Endothelial cell of umbilical vein (primary cell): ENCODE measurements at regions of chr11 and their contacts with region 1.

Region 1: GRCh38 chr11:19311308-19312030 is 70.7 kb upstream of the E2F8 start:
- DNase-seq: peak; percentile 62
- H3K4me3 ChIP-seq: no peak overlapping the region
- H3K27ac ChIP-seq: no peak overlapping the region
- H3K4me1 ChIP-seq: no peaks in the 10 kb centered on the region
- H3K27me3 ChIP-seq: peaks cover 8 to 14% of the 10 kb centered on the region in 2 experiments
- CTCF ChIP-seq: peak; percentile 90 to 97
- POLR2A ChIP-seq: no peak

Region 2: GRCh38 chr11:19301361-19301760 is 10.1 kb before region 1 on chr11:
- CTCF ChIA-PET with region 1: interaction called, 6 read pairs
- POLR2A ChIA-PET with region 1: no interaction called
- dilution Hi-C with region 1: no loop called
- intact Hi-C with region 1: loop called (anchors 1 kb)
- DNase-seq: no peak
- H3K4me3 ChIP-seq: no peak overlapping the region
- H3K27ac ChIP-seq: no peak overlapping the region
- H3K4me1 ChIP-seq: no peaks in the 10 kb centered on the region
- H3K27me3 ChIP-seq: peaks cover 8 to 15% of the 10 kb centered on the region in 2 experiments
- CTCF ChIP-seq: no peak
- POLR2A ChIP-seq: no peak

Region 3: GRCh38 chr11:19359221-19360000 is 47.9 kb after region 1 on chr11:
- CTCF ChIA-PET with region 1: no interaction called
- POLR2A ChIA-PET with region 1: no interaction called
- dilution Hi-C with region 1: no loop called
- intact Hi-C with region 1: no loop called
- DNase-seq: no peak
- H3K4me3 ChIP-seq: no peak overlapping the region
- H3K27ac ChIP-seq: no peak overlapping the region
- H3K4me1 ChIP-seq: peaks cover 10% of the 10 kb centered on the region
- H3K27me3 ChIP-seq: no peaks in the 10 kb centered on the region
- CTCF ChIP-seq: no peak
- POLR2A ChIP-seq: no peak